BJ (cell line): ENCODE measurements at regions of chr1 and their contacts with region 1.

Region 1: GRCh38 chr1:167270349-167271092 is 49.8 kb downstream of the POU2F1 start:
- DNase-seq: no peak
- H3K4me3 ChIP-seq: no peak overlapping the region
- H3K27me3 ChIP-seq: no peaks in the 10 kb centered on the region
- CTCF ChIP-seq: no peak

Region 2: GRCh38 chr1:167207940-167208623 is 62.4 kb before region 1 on chr1:
- CTCF ChIA-PET with region 1: no interaction called
- POLR2A ChIA-PET with region 1: no interaction called
- DNase-seq: no peak
- H3K4me3 ChIP-seq: no peak overlapping the region
- H3K27me3 ChIP-seq: peaks cover 2% of the 10 kb centered on the region; the same call in 1 of the 2 replicates
- CTCF ChIP-seq: peak; percentile 16; the same call in 1 of the 2 replicates

Region 3: DNA sequence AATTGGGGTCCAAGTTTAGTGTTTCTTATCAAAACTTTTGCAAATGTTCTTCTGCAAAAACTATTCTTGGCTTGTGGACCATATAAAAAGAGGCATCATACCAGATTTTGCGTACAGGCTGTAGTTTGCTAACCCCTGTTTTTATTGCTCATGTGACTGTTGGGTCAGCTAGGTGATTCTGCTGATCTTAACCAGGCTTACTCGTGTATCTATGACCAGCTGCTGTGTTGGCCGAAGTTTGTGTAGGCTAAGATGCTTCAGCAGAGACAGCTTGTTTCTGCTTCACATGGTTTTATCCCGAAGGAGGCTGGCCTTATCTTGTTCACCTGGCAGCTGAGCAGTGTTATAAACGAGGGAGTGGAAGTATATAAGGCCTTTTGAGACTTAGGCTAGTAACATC is 11.7 kb before region 1 on chr1:
- CTCF ChIA-PET with region 1: interaction called, 22 read pairs
- POLR2A ChIA-PET with region 1: no interaction called
- DNase-seq: no peak
- H3K4me3 ChIP-seq: no peak overlapping the region
- H3K27me3 ChIP-seq: no peaks in the 10 kb centered on the region
- CTCF ChIP-seq: no peak

Region 4: DNA sequence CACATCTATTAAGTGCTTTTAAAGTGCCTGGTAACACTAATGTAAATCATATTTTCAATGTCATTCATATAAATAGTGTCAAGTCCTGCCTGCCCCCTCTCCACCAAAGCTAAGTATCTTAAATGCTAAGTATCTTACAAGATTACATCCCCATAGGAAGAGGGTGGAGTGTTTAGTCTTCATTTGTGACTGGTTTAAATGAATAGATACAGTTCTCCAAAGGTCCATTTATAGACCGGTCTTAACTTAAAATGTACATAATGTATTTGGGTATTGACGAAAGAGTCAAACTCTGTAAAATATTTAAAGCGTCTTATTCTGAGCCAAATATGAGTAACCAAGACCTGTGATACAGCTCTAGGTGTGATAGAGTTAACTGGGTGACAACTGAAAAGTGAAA is 10.4 kb after region 1 on chr1:
- CTCF ChIA-PET with region 1: interaction called, 18 read pairs
- POLR2A ChIA-PET with region 1: no interaction called
- DNase-seq: no peak
- H3K4me3 ChIP-seq: no peak overlapping the region
- H3K27me3 ChIP-seq: no peaks in the 10 kb centered on the region
- CTCF ChIP-seq: no peak

Region 5: DNA sequence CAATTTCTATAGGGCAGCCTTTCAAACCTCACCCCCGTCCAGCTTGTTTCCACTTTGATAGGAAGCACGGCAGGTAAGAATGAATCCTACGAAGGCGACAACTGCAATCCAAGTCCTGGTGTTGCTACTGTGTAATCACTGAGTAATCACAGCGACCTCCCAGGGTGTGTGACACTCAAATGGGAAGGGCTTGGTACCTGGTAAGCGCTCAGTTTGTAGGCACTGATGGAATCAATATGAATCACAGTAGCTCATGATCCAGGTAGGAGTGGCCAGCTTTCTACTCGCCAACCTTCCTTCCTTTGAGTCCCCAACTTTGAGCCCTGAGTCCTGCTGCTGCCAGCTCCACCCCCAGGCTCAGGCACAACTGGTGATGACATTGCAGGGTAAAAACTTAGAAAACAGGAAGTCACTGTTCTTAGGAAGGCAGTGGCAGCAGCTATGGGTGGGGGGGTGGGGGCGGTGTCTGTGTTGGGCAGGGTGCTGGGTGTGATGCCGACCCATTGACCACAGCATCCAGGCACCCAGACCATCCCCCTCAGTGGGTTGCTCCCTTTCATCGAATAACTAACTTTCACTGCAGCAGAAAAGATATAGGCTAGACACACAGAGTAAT is 177.1 kb after region 1 on chr1:
- CTCF ChIA-PET with region 1: interaction called, 17 read pairs
- POLR2A ChIA-PET with region 1: no interaction called
- DNase-seq: no peak
- H3K4me3 ChIP-seq: no peak overlapping the region
- H3K27me3 ChIP-seq: peaks cover 9% of the 10 kb centered on the region; the same call in 1 of the 2 replicates
- CTCF ChIP-seq: no peak